Endothelial cell of umbilical vein (primary cell): ENCODE measurements at regions of chr6 and their contacts with region 1.

Region 1: DNA sequence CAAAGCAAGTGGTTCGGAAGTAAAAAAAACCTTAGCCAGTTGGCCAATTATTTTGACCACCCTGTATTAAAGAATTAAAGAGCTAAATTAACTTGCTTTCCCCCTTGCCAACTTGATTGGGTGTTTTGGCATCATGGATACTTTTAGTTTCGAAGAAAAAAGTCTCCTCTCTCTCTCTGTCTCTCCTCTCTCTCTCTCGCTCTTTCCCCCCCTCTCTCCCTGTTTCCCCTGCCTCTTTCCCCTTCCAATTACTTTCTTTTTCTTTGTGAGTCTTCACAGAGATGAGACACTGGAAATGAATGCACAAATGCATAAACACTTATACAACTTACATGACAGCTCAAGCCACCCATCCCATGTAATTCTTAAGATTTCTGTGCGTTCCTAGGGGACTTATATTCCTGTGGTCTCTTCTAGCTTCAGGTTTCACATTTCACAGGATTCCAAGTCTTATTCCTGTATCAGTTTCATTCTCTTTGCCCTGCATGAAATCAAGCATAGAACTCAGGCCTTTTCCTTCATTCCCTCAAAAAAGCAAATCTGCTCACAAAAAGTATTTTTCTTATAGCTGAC is 32.9 kb upstream of the EYA4 start:
- DNase-seq: no peak
- H3K4me3 ChIP-seq: no peak overlapping the region
- H3K27ac ChIP-seq: no peak overlapping the region
- H3K4me1 ChIP-seq: no peaks in the 10 kb centered on the region
- H3K27me3 ChIP-seq: no peaks in the 10 kb centered on the region
- CTCF ChIP-seq: no peak
- POLR2A ChIP-seq: no peak

Region 2: GRCh38 chr6:133062077-133062476 is 146.2 kb before region 1 on chr6:
- CTCF ChIA-PET with region 1: no interaction called
- POLR2A ChIA-PET with region 1: interaction called, 12 read pairs
- dilution Hi-C with region 1: no loop called
- intact Hi-C with region 1: no loop called
- DNase-seq: no peak
- H3K4me3 ChIP-seq: no peak overlapping the region
- H3K27ac ChIP-seq: no peak overlapping the region
- H3K4me1 ChIP-seq: no peaks in the 10 kb centered on the region
- H3K27me3 ChIP-seq: no peaks in the 10 kb centered on the region
- CTCF ChIP-seq: no peak
- POLR2A ChIP-seq: no peak

Region 3: GRCh38 chr6:133286765-133287164 is 78.5 kb after region 1 on chr6:
- CTCF ChIA-PET with region 1: no interaction called
- POLR2A ChIA-PET with region 1: no interaction called
- dilution Hi-C with region 1: no loop called
- intact Hi-C with region 1: no loop called
- DNase-seq: peak; percentile 8
- H3K4me3 ChIP-seq: no peak overlapping the region
- H3K27ac ChIP-seq: no peak overlapping the region
- H3K4me1 ChIP-seq: no peaks in the 10 kb centered on the region
- H3K27me3 ChIP-seq: peaks cover 0 to 3% of the 10 kb centered on the region in 2 experiments
- CTCF ChIP-seq: no peak
- POLR2A ChIP-seq: no peak